ENCODE measurements at regions of chr3 and their contacts with region 1.

Region 1: DNA sequence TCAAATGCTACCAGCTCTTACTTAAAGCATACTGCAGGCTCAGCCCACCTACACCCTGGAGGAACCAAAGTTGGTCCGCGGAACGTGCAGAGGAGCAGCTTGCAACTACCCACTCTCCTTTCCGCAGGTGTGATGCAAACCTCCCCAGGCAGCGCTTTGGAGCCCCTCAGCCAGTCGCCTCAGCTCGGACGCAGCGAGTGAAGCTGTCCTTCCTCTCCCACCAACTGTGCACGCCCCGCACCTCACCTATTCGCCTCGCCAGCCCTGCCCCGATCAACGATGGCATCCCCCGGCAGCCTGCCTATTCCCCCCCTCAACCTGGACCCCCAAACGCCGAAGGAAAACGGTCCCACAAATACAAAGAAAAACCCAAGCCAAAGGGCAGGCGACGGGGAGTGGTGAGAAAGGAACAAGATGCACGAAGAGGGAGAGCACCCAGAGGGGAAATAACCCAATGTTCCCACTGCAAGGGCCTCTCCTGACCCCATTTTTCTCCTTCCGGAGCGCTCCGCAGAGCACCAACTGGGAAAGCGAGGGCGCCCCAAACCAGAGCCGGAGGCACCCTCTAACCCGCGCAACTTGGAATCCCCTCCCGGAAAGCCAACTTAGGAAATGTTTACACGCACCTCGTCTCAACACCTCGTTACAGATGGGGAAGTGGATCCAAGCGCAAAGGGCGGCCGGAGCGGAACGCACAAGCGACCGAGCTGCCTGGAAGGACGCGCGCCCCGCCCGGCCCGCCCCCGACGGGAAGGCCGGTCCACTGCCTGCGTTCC is 665 bp downstream of the GLB1 start:
- DNase-seq: no peak
- H3K4me3 ChIP-seq: peak overlapping the region; percentile 88 to 99 (median 96)
- H3K27ac ChIP-seq: peak overlapping the region; percentile 93 to 99 (median 98)
- H3K4me1 ChIP-seq: peaks cover 0 to 15% (median 12%) of the 10 kb centered on the region in 4 donors
- H3K27me3 ChIP-seq: no peaks in the 10 kb centered on the region
- CTCF ChIP-seq: no peak
- EP300 ChIP-seq: no peak
- POLR2A ChIP-seq: no peak

Region 2: DNA sequence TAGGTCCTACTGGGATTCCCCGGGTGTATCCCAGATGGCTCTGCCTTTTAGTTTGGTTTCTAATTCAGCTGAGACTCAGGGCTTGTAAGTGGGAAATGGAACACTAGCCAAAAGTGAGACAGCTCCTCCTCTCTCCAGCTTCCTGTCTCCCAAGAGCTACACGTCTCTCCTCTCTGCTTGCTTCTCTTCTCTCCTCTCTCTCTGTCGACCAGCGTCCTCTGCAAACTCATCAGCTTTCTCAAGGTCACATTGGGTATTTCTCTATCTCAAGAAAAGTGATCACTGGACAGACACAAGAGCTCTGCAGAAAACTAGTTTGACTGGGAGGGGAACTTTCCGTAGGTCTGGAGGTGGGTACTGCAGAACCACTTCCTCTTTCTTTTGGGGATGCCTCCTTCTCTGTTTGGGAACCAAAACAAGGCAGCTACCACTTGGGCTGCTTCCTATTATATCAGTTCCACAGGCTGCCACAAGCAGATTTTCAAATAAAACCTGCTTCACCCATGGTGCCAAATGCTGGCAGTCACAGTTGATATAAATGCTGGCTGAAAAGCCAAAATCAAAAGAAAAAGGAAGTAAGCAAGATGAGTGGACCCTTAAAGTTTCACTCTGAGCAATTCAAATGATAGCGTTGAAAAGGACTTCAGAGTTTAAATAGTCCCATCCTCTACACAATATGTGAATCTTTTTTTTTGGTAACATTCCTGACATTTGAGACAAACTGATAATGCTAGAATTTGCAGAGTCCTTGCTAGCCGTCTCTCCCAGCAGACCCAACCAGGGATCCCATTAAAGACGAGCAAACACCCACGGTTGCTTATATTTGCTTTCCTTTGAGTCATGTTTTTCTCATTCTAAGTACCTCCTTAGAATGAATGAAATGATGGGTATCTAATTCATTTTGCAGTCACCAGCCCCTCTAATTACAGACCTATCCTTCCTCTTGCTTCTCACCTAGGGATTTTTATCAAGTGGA is 518.4 kb before region 1 on chr3:
- intact Hi-C with region 1: loop called (anchors 5 kb)
- DNase-seq: no peak
- H3K4me3 ChIP-seq: no peak overlapping the region
- H3K27ac ChIP-seq: peak overlapping the region in 1 of 4 donors; percentile 2
- H3K4me1 ChIP-seq: no peaks in the 10 kb centered on the region
- H3K27me3 ChIP-seq: no peaks in the 10 kb centered on the region
- CTCF ChIP-seq: no peak
- EP300 ChIP-seq: no peak
- POLR2A ChIP-seq: no peak

Region 3: GRCh38 chr3:33001889-33002288 is 94.4 kb before region 1 on chr3:
- intact Hi-C with region 1: no loop called
- DNase-seq: no peak
- H3K4me3 ChIP-seq: no peak overlapping the region
- H3K27ac ChIP-seq: no peak overlapping the region
- H3K4me1 ChIP-seq: no peaks in the 10 kb centered on the region
- H3K27me3 ChIP-seq: no peaks in the 10 kb centered on the region
- CTCF ChIP-seq: no peak
- EP300 ChIP-seq: no peak
- POLR2A ChIP-seq: no peak

Region 4: GRCh38 chr3:33113772-33114621 is 17.7 kb after region 1 on chr3 and contains the start of gene CRTAP:
- intact Hi-C with region 1: loop called (anchors 1 kb)
- DNase-seq: peak; percentile 99
- H3K4me3 ChIP-seq: peak within 1 kb of the TSS; percentile 60 to 92 (median 75)
- H3K27ac ChIP-seq: peak within 1 kb of the TSS; percentile 95 to 99 (median 99)
- H3K4me1 ChIP-seq: peaks cover 0 to 34% (median 20%) of the 10 kb centered on the region in 4 donors
- H3K27me3 ChIP-seq: no peaks in the 10 kb centered on the region
- CTCF ChIP-seq: no peak
- EP300 ChIP-seq: no peak
- POLR2A ChIP-seq: peak; percentile 26 to 29
- total RNA-seq, gene CRTAP: 245 to 509 (median 309) TPM